MCF 10A (cell line): ENCODE measurements at regions of chr7 and their contacts with region 1.

Region 1: DNA sequence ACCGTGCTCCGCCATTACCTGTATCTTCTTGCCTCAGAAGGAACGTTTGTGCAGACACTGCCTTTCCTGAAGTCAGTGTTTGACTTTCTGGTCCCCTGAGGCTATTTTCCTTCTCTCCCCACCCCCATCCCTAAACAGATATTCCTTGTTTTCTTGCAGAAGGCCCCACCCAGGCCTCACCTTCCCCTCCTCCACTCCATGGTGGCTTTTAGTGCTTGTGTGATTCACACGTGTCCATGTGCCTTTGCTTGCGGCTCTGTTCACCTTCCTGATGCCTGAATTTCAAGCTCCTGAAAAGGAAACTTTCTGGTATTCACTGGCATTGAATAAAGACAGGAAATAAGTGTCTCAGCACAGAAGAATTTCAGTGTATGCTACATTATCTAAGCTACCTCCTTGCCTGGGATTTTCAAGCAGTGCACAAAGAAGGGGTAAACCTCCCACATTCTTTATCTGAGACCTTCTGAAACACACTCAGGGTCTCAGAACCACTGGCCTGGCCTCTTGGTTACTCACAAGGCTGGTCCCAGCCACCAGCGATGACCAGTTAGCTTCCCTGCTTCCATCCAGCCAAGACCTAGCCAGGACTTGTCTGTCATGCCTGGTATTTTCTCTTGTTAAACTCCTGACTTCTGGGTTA is 17.2 kb upstream of the UBE2H start:
- DNase-seq: peak; percentile 91
- H3K4me3 Mint-ChIP-seq: peak overlapping the region; percentile 46
- H3K27ac Mint-ChIP-seq: peak overlapping the region; percentile 88
- H3K4me1 Mint-ChIP-seq: peaks cover 33% of the 10 kb centered on the region
- H3K27me3 Mint-ChIP-seq: no peaks in the 10 kb centered on the region
- CTCF ChIP-seq: no peak

Region 2: DNA sequence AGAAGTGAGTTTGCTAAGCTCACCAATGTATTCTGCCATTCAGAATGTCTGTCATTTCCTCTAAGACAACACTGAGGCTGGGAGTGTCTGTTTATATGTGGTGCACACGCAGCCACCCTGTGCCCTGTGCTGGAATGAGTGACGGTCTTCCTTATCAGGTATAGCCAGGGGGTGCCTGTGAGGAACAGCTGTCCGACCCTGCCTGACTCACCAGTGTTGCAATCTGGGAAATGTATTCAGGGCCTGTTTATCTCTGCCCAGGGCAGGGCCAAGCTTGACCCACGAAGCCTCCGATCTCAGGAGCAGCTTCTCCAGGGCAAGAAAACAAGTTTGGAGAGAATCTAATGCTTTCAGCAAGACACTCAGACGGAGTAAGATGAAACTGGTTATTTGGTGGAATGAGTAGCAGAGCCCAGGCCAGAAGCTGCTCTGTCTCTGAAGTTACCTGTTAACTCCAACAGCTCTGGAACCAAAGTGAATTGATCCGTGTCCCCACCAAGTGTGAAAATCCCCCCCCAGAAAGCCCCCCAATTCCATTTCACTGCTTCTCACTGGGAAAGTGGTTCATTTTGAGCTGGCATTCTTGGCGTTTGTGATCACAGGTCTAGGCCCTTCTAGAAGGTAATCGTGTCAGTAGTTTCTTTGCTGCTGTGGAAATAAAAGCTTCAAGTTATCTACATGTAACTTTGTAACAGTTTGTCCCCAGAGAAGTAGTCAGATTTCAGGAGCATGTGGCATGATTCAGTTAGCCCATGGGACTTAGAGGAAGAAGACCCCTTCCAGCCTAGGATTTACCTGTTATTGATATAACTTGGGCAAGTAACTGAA is 11.1 kb before region 1 on chr7:
- CTCF ChIA-PET with region 1: interaction called, 5 read pairs
- POLR2A ChIA-PET with region 1: interaction called, 177 read pairs
- intact Hi-C with region 1: no loop called
- DNase-seq: peak; percentile 96
- H3K4me3 Mint-ChIP-seq: peak overlapping the region; percentile 46
- H3K27ac Mint-ChIP-seq: peak overlapping the region; percentile 99
- H3K4me1 Mint-ChIP-seq: peaks cover 36% of the 10 kb centered on the region
- H3K27me3 Mint-ChIP-seq: no peaks in the 10 kb centered on the region
- CTCF ChIP-seq: no peak

Region 3: DNA sequence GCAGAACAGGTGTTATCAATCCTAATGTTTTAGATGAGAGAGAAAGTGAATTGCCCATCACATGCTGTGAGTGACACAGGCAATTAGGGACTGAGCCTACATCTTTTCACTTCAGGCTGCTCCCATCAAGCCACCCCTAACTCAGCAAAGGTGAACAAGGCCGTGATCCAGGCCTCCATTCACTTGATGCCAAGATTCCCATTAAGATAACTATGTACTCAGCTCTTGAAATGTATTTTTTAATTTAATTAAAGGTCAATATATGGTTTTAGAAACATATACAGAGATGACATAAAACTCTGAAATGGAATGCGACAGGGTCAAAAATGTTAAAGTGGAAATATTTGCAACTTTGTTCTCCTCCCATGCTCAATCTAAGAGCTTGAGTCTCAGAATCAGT is 10.7 kb after region 1 on chr7:
- CTCF ChIA-PET with region 1: interaction called, 6 read pairs
- POLR2A ChIA-PET with region 1: interaction called, 10 read pairs
- intact Hi-C with region 1: no loop called
- DNase-seq: no peak
- H3K4me3 Mint-ChIP-seq: no peak overlapping the region
- H3K27ac Mint-ChIP-seq: no peak overlapping the region
- H3K4me1 Mint-ChIP-seq: peaks cover 5% of the 10 kb centered on the region
- H3K27me3 Mint-ChIP-seq: no peaks in the 10 kb centered on the region
- CTCF ChIP-seq: no peak

Region 4: DNA sequence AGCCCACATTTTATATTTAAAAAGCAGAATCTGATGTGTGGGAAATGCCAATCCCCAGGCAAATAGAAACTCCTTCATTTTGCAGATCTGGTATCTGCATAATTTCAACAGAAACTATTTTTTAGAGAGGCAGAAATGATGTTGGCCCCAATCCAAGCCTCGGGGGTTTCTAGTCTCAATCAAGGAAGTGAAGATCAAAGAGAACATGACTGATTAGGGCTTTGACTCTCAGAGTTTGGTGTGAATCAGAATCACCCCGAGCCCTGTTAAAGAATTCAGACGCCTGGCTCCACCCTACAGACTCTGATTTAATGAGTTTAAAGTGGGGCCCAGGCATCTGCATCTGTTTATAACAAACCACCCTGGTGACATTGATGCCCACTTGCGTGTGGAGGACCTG is 19.5 kb after region 1 on chr7:
- CTCF ChIA-PET with region 1: no interaction called
- POLR2A ChIA-PET with region 1: interaction called, 10 read pairs
- intact Hi-C with region 1: no loop called
- DNase-seq: peak; percentile 15
- H3K4me3 Mint-ChIP-seq: no peak overlapping the region
- H3K27ac Mint-ChIP-seq: no peak overlapping the region
- H3K4me1 Mint-ChIP-seq: no peaks in the 10 kb centered on the region
- H3K27me3 Mint-ChIP-seq: no peaks in the 10 kb centered on the region
- CTCF ChIP-seq: no peak